Activated B cell treated with CpG ODN at 0.5 μM for 24 hours (primary cell): ENCODE measurements at regions of chr2 and their contacts with region 1.

Region 1: GRCh38 chr2:241339839-241340630 is 16.1 kb upstream of the FARP2 start:
- DNase-seq: no peak
- ATAC-seq: no peak
- H3K4me3 Mint-ChIP-seq: no peak overlapping the region
- H3K27ac Mint-ChIP-seq: no peak overlapping the region
- H3K4me1 Mint-ChIP-seq: peaks cover 21% of the 10 kb centered on the region
- H3K27me3 Mint-ChIP-seq: no peaks in the 10 kb centered on the region
- CTCF ChIP-seq: no peak

Region 2: DNA sequence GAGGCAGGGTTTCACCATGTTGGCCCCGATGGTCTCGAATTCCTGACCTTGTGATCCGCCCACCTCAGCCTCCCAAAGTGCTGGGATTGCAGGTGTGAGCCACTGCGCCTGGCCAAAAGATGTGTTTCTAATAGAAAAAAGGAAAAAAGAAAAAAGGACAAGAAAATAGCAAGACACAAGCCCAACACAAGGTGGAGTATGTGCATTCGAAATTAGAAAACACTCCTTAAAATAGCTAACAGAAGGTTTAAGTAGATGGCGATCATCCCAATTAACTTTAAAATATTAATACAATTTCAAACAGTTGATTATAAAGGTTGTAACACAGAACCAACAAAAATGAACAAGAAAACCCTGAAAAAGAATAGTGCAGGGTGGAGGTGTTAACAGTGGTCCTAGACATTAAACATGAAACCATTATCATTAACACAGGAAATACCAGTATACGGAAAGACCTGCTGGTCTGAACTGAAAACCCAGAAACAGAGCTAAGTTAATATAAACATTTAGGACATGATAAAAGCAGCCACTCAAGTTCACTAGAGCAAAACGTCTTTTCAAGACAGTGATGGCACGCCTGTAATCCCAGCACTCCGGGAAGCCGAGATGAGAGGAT is 82.5 kb before region 1 on chr2:
- CTCF ChIA-PET with region 1: no interaction called
- POLR2A ChIA-PET with region 1: no interaction called
- intact Hi-C with region 1: loop called (anchors 5 kb)
- DNase-seq: no peak
- ATAC-seq: no peak
- H3K4me3 Mint-ChIP-seq: no peak overlapping the region
- H3K27ac Mint-ChIP-seq: no peak overlapping the region
- H3K4me1 Mint-ChIP-seq: no peaks in the 10 kb centered on the region
- H3K27me3 Mint-ChIP-seq: no peaks in the 10 kb centered on the region
- CTCF ChIP-seq: no peak